A673 (cell line): ENCODE measurements at regions of chr1 and their contacts with region 1.

Region 1: DNA sequence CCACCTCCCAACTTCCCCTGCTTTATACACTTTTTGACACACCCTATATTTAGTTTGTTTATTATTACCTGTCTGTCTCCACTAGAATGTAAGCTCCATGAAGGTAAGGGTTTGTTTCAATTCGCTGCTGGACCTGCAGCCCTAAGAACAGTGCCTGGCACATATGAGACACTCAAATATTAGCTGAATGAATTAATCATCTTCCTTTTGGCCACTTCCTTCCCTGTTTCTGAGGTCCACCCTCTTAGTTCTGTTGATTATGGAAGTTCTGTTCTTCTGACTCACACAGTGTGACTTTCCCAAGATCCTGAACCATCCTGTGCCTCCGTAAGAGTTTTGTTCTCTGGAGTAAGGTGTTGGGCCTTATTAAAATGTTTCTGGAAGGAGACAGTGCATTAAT is 40.4 kb upstream of the GJA5 start:
- DNase-seq: no peak
- H3K4me3 ChIP-seq: no peak overlapping the region
- H3K27ac ChIP-seq: no peak overlapping the region
- H3K4me1 ChIP-seq: no peaks in the 10 kb centered on the region
- H3K27me3 ChIP-seq: no peaks in the 10 kb centered on the region
- CTCF ChIP-seq: no peak

Region 2: GRCh38 chr1:147741065-147741464 is 59.7 kb before region 1 on chr1:
- CTCF ChIA-PET with region 1: no interaction called
- POLR2A ChIA-PET with region 1: no interaction called
- intact Hi-C with region 1: loop called (anchors 5 kb)
- DNase-seq: no peak
- H3K4me3 ChIP-seq: no peak overlapping the region
- H3K27ac ChIP-seq: no peak overlapping the region
- H3K4me1 ChIP-seq: no peaks in the 10 kb centered on the region
- H3K27me3 ChIP-seq: peaks cover 2% of the 10 kb centered on the region
- CTCF ChIP-seq: no peak

Region 3: DNA sequence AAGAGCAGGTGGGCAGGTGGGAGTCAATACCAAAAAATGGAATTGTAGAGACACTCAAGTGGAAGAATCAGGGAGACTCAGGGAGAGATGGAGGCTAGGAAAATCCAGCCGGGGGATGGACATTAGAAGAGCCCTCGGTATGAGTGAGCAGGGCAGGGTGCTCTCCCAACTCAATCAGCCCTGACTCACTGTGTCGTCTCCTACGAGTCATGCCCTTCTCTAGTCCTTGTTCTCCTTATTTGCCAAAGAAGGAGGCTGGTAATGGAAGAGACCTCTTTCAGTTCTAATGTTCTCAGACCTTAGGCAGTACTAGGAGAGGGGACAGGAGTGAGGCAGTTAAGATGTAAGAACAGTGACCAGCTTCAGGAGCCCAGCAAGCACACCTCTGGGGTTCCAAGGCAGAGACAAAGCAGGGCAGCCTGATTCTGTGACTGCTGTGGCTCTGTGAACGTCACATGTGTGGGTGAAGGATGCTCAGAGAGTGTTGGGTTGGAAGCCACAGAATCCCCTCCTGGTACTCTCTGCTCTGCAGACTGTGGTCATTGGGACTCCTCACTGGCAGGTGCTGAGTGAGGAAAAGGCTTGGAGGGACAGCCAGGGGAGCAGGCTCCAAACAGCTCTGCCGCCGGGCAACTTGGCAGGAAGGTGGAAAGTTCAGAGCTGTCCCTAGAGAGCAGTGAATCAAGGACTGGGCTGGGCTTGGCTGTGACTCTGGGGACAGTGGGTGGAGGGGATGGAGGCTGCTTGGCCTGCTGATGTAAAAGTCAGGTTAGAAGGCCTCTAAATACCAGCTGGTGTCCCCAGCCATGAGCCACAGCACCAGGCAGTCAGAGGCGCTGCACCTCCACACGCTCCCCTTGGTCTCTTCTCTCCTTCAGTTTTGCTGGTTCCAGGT is 29.3 kb before region 1 on chr1:
- CTCF ChIA-PET with region 1: no interaction called
- POLR2A ChIA-PET with region 1: no interaction called
- intact Hi-C with region 1: loop called (anchors 2 kb)
- DNase-seq: no peak
- H3K4me3 ChIP-seq: no peak overlapping the region
- H3K27ac ChIP-seq: no peak overlapping the region
- H3K4me1 ChIP-seq: peaks cover 5% of the 10 kb centered on the region
- H3K27me3 ChIP-seq: no peaks in the 10 kb centered on the region
- CTCF ChIP-seq: no peak

Region 4: DNA sequence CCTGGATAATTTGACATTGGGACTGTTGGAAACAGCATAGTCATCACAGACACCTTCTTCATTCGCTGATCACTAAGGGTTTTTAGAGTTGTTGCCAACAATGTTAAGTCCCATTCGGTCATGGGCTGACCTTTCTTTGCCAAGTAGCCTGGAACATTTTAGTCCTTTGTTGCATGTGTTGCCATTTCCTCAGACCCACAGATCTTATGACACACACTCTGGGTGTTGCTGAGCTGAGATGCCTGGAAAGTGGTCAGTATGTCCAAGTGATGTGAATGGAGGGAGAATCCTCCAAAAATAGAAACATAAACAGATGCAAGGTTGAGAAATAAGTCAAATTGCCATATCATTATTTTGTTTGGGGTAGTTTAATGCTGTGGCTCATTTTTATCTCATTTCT is 21.1 kb after region 1 on chr1:
- CTCF ChIA-PET with region 1: no interaction called
- POLR2A ChIA-PET with region 1: no interaction called
- intact Hi-C with region 1: no loop called
- DNase-seq: no peak
- H3K4me3 ChIP-seq: no peak overlapping the region
- H3K27ac ChIP-seq: no peak overlapping the region
- H3K4me1 ChIP-seq: no peaks in the 10 kb centered on the region
- H3K27me3 ChIP-seq: peaks cover 10% of the 10 kb centered on the region
- CTCF ChIP-seq: no peak